Right ventricle myocardium superior (tissue), 1 donor: ENCODE measurements at regions of chr11 and their contacts with region 1.

Region 1: DNA sequence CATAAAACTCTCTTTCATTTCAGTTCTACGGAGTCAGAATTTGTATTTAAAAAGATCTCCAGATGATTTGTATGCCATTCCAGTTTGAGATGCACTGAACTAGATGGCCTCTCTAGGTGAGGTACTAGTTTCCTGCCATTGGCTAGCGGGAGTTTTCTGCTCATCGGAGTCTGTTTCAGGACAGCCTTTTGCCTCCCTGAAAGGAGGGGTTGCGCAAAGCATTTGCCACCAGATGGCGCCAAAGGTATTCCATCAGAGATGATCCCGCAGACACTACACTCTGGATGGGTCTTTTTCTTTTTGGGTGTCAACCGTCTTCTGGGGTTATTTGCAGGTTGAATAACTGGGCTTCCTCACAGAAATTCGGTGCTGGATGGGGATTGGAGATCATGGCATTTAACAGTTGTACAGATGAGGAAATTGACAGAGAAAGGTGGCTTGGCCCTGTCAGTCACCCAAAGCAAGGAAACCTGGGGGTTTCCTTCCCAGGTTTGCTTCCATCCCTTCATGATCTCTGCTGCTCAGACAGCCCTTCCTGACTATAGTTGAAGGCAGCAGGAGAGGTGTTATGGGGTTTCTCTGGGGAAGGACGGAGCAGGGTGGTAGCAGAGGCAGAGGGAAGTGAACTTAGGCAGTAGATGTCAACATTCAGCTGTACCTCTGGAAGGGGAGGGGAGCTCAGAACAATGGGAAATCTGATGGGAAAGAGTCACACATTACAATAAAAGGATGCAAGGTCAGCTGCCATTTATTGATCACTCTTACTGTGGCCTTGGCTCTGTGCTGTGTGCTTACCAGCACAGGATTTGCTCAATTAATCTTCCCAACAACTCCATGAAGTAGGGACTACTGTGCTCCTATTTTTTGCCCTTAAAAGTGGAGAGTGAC is 81.6 kb downstream of the CCDC81 start:
- DNase-seq: peak; percentile 87
- ATAC-seq: peak; percentile 87

Region 2: DNA sequence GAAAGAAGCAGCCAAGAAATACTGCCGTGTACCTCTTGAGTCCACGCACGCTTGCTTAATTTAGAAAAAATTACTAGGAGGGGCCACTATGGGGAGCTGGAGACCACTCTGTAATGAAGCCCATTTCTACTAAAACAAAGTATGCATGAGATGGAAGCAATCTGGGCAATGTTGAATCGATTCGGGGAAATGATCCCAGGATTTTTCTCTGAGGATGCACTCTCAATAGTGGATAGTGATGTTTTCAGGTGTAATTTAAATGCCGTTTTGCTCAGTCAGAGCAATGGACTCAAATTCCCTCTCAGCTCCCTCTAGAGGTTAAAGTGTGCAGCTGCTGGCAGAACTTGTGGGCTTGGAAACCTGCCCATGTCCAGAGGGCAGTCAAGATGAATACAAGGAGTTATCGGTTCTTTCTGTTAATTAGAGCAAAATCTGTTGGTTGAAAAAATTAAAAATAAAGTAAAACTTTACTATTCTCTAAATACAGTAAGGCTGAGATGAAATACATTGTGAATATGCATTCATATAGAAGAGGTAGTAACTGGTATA is 152.0 kb after region 1 on chr11:
- intact Hi-C with region 1: loop called (anchors 5 kb)
- DNase-seq: peak; percentile 76
- ATAC-seq: peak; percentile 87

Region 3: GRCh38 chr11:86740709-86741483 is 284.6 kb after region 1 on chr11:
- intact Hi-C with region 1: no loop called
- DNase-seq: peak; percentile 42
- ATAC-seq: peak; percentile 81

Region 4: DNA sequence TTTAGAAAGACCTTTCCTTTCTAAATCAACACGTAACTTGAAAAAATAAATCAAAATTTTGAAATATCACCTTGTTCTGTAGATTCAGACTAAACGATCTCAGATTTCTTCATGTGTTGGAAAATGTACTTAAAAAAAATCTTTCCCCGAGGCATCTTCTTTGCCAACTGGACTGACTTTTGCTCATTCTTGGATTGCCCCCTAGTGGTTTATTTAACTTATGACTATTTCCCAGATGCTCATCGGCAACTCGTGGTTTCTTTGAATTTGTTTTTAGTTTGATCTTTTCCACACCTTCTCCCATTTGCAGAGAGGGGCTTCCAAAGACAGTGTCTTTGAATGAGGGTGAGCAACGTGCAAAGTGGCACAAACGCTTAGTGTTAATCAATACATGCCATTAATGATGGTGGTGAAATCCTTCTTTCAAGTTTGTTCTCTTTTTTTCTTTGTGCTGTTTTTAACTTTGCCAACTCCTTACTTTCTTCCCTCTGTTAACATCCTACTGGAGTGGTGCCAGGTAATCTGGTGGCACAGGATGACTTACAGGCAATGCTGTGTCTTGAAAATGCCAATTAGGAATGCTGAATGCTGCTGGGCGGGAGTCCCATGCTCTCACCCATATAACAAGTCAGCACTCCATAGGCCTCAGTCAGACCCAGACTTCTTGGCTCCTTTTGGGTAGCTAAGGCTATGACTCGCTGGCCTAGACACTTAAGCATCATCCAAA is 362.3 kb after region 1 on chr11:
- intact Hi-C with region 1: loop called (anchors 5 kb)
- DNase-seq: no peak
- ATAC-seq: peak; percentile 65